ENCODE measurements at regions of chr21 and their contacts with region 1.

Region 1: DNA sequence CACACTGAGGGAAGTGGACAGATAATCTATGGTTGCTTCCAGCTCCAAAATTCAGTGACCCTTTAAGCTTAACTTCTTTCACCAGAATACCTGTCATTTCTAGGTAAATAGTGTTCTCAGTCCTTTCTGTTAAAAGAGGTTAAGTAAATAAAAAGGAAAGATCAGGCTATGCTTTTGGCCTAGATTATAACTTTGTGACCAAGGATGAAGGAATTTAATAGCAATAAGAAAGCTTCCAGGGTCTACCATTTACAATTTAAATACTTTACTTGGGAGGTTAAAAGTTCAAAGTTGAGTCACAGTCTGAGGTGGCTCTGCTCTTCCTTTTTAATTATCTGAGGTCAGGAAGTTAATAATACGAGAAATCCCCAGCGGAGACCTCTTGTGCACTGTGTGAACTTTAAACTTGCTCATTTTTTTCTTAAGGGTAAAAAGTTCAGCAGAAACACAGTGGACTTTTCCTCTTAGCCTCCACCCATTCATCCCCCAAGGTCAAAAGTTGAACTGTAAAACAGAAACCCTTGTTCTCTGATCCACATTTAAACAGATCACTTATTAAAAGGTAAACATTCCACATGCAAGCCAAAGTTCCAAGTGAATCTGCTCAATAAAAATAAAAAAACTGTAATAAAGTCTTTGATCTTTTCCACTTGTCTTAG is 187.1 kb downstream of the NRIP1 start:
- DNase-seq: peak; percentile 97
- ATAC-seq: peak; percentile 62
- H3K4me3 ChIP-seq: peak overlapping the region; percentile 35
- H3K27ac ChIP-seq: peak overlapping the region; percentile 94
- H3K4me1 ChIP-seq: peaks cover 88% of the 10 kb centered on the region
- H3K27me3 ChIP-seq: no peaks in the 10 kb centered on the region
- CTCF ChIP-seq: no peak

Region 2: GRCh38 chr21:14630556-14631069 is 247.1 kb before region 1 on chr21:
- CTCF ChIA-PET with region 1: no interaction called
- POLR2A ChIA-PET with region 1: no interaction called
- intact Hi-C with region 1: no loop called
- DNase-seq: peak; percentile 21
- ATAC-seq: no peak
- H3K4me3 ChIP-seq: no peak overlapping the region
- H3K27ac ChIP-seq: no peak overlapping the region
- H3K4me1 ChIP-seq: no peaks in the 10 kb centered on the region
- H3K27me3 ChIP-seq: no peaks in the 10 kb centered on the region
- CTCF ChIP-seq: no peak

Region 3: GRCh38 chr21:14942801-14943490 is 65.2 kb after region 1 on chr21:
- CTCF ChIA-PET with region 1: no interaction called
- POLR2A ChIA-PET with region 1: no interaction called
- intact Hi-C with region 1: loop called (anchors 2 kb)
- DNase-seq: no peak
- ATAC-seq: peak; percentile 8
- H3K4me3 ChIP-seq: peak overlapping the region; percentile 9; the same call in 1 of the 2 replicates
- H3K27ac ChIP-seq: peak overlapping the region; percentile 71
- H3K4me1 ChIP-seq: peaks cover 38% of the 10 kb centered on the region
- H3K27me3 ChIP-seq: no peaks in the 10 kb centered on the region
- CTCF ChIP-seq: no peak

Region 4: GRCh38 chr21:15293240-15293639 is 415.5 kb after region 1 on chr21:
- CTCF ChIA-PET with region 1: no interaction called
- POLR2A ChIA-PET with region 1: no interaction called
- intact Hi-C with region 1: loop called (anchors 5 kb)
- DNase-seq: peak; percentile 94
- ATAC-seq: peak; percentile 99
- H3K4me3 ChIP-seq: no peak overlapping the region
- H3K27ac ChIP-seq: peak overlapping the region; percentile 65
- H3K4me1 ChIP-seq: peaks cover 32% of the 10 kb centered on the region
- H3K27me3 ChIP-seq: no peaks in the 10 kb centered on the region
- CTCF ChIP-seq: no peak

Measured in PC-3 (cell line).